Mammary epithelial cell (primary cell): ENCODE measurements at regions of chr17 and their contacts with region 1.

Region 1: DNA sequence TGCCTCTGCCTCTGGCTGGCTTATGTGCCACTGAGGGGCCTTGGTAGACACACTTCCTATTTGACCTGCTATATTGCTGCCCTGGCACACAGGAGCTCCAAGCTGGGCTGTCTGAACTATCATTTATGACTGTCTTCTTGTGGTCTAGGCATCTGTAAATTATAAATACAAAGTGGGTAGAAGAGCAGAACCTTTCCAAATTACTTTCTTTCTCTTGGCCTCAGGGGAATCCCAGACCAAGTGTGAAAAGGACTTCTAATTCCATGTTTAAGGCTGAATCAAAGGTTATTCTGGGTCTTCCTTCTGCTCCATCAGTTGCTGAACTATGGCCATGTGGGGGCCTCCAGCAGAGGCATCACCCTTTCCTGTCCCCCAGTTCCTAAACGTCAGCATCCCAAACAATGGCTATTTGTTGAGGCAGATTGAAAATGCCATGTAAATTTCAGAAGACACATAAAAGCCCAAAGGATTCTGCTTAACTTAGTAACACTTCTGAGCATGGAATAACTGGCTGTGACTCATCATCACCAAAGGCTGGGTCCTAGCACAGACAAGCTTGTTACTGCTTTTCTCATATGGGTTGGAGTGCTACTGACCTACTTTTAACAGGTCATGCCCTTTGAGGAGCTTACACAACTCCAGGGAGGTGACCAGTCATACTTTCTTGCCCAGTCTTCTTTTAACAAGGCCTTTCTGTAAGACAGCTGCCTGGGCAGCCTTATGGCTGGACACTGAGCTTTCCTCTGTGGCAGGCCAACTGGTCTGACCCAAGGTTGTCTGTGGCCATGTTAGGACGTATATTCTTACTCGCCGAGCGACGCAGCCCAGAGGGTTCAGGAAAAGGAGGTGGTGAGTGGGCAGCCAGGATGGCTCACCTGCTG is 154.8 kb downstream of the VPS53 start:
- DNase-seq: peak; percentile 78
- H3K4me3 ChIP-seq: no peak overlapping the region
- H3K27ac ChIP-seq: peak overlapping the region; percentile 41
- H3K4me1 ChIP-seq: peaks cover 38% of the 10 kb centered on the region
- H3K27me3 ChIP-seq: no peaks in the 10 kb centered on the region
- CTCF ChIP-seq: no peak

Region 2: DNA sequence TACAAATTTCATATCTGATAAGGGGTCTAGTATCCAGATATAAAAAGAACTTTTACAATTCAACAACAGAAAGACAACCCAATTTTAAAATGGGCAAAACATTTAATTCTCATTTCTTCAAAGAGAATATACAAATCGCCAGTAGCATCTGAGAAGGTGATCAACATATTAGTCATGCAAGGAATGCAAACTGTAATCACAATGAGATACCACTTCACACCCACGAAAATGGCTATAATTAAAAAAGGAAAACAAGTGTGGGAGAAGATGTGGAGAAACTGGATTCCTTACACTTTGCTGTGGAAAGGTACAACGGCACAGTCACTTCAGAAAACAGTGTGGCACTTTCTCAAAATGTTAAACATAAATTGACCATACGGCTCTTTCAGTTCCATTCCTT is 13.3 kb before region 1 on chr17:
- CTCF ChIA-PET with region 1: no interaction called
- dilution Hi-C with region 1: no loop called
- in situ Hi-C with region 1: no loop called
- intact Hi-C with region 1: loop called (anchors 2 kb)
- DNase-seq: no peak
- H3K4me3 ChIP-seq: no peak overlapping the region
- H3K27ac ChIP-seq: no peak overlapping the region
- H3K4me1 ChIP-seq: peaks cover 4% of the 10 kb centered on the region
- H3K27me3 ChIP-seq: no peaks in the 10 kb centered on the region
- CTCF ChIP-seq: no peak

Region 3: GRCh38 chr17:622356-622755 is 62.6 kb after region 1 on chr17:
- CTCF ChIA-PET with region 1: interaction called, 3 read pairs
- dilution Hi-C with region 1: no loop called
- in situ Hi-C with region 1: no loop called
- intact Hi-C with region 1: loop called (anchors 5 kb)
- DNase-seq: peak; percentile 57
- H3K4me3 ChIP-seq: no peak overlapping the region
- H3K27ac ChIP-seq: no peak overlapping the region
- H3K4me1 ChIP-seq: peaks cover 15% of the 10 kb centered on the region
- H3K27me3 ChIP-seq: no peaks in the 10 kb centered on the region
- CTCF ChIP-seq: no peak

Region 4: GRCh38 chr17:693791-694638 is 134.2 kb after region 1 on chr17:
- CTCF ChIA-PET with region 1: no interaction called
- dilution Hi-C with region 1: loop called (anchors 10 kb)
- in situ Hi-C with region 1: no loop called
- intact Hi-C with region 1: loop called (anchors 5 kb)
- DNase-seq: peak; percentile 95
- H3K4me3 ChIP-seq: no peak overlapping the region
- H3K27ac ChIP-seq: peak overlapping the region; percentile 69
- H3K4me1 ChIP-seq: peaks cover 47% of the 10 kb centered on the region
- H3K27me3 ChIP-seq: no peaks in the 10 kb centered on the region
- CTCF ChIP-seq: no peak

Region 5: DNA sequence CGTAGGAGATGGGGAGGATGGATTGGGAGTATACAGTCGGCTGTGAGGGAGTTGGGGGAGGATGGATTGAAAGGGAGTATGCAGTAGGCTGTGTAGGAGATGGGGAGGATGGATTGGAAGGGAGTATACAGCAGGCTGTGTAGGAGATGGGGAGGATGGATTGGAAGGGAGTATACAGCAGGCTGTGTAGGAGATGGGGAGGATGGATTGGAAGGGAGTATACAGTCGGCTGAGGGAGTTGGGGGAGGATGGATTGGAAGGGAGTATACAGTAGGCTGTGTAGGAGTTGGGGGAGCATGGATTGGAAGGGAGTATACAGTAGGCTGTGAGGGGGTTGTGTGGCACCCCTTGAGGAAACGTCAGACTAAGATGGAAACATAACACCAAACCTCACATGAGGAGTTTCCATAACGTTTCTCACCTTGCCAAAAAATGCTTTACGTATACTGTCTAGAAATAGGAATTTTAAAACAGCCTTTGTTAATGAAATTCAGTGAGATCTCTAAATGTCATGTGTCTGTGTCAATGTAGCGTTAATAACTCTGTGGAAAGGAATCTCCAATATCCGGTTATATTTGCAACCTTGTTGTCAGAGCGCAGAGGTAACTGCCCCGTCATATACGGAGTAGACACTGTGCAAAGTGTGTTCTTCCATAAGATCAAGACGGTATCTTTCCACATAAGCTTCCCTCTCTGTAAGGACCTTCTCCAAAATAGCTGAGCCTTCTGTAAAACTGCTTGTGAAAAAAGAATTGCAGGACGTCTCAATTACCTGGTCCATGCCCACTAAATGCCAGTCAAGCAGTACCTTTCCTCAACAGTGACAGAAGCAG is 161.1 kb after region 1 on chr17:
- CTCF ChIA-PET with region 1: no interaction called
- dilution Hi-C with region 1: no loop called
- in situ Hi-C with region 1: no loop called
- intact Hi-C with region 1: no loop called
- DNase-seq: no peak
- H3K4me3 ChIP-seq: peak overlapping the region in 1 of 3 experiments; percentile 14
- H3K27ac ChIP-seq: peak overlapping the region; percentile 89
- H3K4me1 ChIP-seq: peaks cover 11% of the 10 kb centered on the region
- H3K27me3 ChIP-seq: no peaks in the 10 kb centered on the region
- CTCF ChIP-seq: no peak